Gastrocnemius medialis (tissue), 4 donors: ENCODE measurements at regions of chr3 and their contacts with region 1.

Region 1: GRCh38 chr3:134473868-134474546 is 11.8 kb downstream of the ANAPC13 start:
- DNase-seq: peak; percentile 40 to 41
- ATAC-seq: peak; percentile 63 to 75
- H3K4me3 ChIP-seq: no peak overlapping the region
- H3K27ac ChIP-seq: no peak overlapping the region
- H3K4me1 ChIP-seq: peaks cover 12 to 15% of the 10 kb centered on the region in 2 donors
- H3K27me3 ChIP-seq: no peaks in the 10 kb centered on the region
- CTCF ChIP-seq: peak; percentile 68 to 82 (median 79)
- POLR2A ChIP-seq: no peak

Region 2: GRCh38 chr3:133927540-133928066 is 546.4 kb before region 1 on chr3:
- in situ Hi-C with region 1: no loop called
- intact Hi-C with region 1: loop called (anchors 10 kb)
- DNase-seq: no peak
- ATAC-seq: peak; percentile 53 to 80
- H3K4me3 ChIP-seq: peak overlapping the region; percentile 28 to 80 (median 52)
- H3K27ac ChIP-seq: no peak overlapping the region
- H3K4me1 ChIP-seq: peaks cover 0 to 9% of the 10 kb centered on the region in 2 donors
- H3K27me3 ChIP-seq: peaks cover 0 to 2% (median 0%) of the 10 kb centered on the region in 3 donors
- CTCF ChIP-seq: peak; percentile 59 to 89 (median 85)
- POLR2A ChIP-seq: no peak

Region 3: DNA sequence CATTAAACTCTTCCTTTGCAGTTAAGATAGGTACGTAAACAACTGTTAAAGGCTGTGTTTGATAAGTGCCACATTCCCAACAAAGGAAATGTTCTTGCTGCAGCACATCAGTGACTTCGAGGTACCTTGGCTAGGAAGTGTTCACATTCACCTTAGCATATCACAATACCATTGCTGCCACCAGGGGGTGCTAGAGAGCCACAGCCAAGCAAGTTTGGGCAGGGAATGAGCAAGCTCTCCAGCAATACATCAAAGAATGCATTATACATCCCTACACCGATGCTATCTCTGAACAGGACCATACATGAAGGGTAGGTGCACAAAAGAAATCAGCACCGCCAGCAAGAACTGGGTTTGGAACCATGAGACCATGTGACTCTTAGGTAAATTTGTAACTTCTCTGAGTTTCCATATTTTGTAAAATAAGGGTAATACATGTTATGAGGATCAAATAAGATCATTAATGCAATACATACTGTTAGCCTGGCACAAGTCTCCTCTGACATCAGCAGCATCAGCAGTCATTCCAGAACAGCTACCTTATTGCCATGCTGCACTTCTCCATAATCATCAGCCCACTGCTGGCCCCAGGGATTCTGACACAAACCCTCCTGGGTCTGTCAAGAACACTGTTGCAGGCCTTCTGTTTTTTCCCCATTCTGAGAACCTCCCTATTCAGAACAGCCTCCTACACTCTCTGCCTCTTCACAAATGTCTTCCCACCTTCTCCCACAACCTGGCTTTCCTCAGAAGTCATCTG is 260.9 kb before region 1 on chr3:
- in situ Hi-C with region 1: loop called in 3 of 4 experiments (anchors 5 kb)
- intact Hi-C with region 1: loop called (anchors 5 kb)
- DNase-seq: peak; percentile 37 to 65
- ATAC-seq: peak; percentile 78 to 84
- H3K4me3 ChIP-seq: no peak overlapping the region
- H3K27ac ChIP-seq: no peak overlapping the region
- H3K4me1 ChIP-seq: peaks cover 4 to 18% of the 10 kb centered on the region in 2 donors
- H3K27me3 ChIP-seq: no peaks in the 10 kb centered on the region
- CTCF ChIP-seq: peak; percentile 77 to 98 (median 92)
- POLR2A ChIP-seq: no peak

Region 4: GRCh38 chr3:134308350-134308891 is 165.6 kb before region 1 on chr3:
- in situ Hi-C with region 1: loop called (anchors 5 kb)
- intact Hi-C with region 1: loop called (anchors 1 kb)
- DNase-seq: peak; percentile 62 to 82
- ATAC-seq: peak; percentile 74 to 79
- H3K4me3 ChIP-seq: no peak overlapping the region
- H3K27ac ChIP-seq: peak overlapping the region; percentile 3 to 82 (median 22)
- H3K4me1 ChIP-seq: peaks cover 6 to 15% of the 10 kb centered on the region in 2 donors
- H3K27me3 ChIP-seq: no peaks in the 10 kb centered on the region
- CTCF ChIP-seq: peak; percentile 99 to 100 (median 99)
- POLR2A ChIP-seq: no peak

Region 5: DNA sequence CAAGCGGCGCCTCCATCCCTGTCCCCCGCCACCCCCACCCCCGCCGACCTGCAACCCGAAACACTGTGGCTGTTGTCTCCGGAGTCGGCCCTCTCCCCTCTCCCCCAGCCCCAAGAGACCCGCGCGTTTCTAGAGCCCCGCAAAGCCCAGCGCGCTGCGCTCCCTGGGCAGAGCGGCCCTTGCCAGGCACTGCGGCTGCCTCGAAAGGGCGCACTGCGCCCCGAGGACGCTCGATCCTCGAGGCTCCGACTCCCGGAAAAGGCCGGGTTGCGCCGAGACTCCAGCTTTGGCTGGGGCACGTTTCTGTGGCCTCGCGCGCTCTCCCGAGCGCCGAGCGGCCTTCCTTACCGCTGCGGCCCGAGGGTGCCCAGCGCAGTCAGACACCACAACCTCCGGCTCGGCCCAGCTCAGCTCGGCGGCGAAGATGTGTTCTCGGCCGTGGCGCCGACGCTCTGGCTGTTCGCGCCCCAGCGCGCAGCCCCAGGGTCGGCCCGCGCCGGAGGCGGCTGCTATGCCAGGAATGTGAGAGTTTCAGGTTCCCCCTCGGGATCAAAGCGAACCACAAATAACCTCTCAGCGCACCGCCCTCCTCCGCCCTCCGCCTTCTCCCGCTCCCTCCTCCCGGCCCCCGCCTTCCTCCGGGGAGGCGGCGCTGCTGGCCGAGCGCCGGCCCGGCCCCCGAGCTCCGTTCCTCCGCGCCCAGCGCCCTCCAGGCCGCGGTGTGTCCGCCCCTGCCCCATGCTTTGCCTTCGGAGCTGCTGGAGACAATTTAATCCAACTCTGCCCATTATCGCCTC is 99.8 kb before region 1 on chr3 and contains the start of gene AMOTL2:
- in situ Hi-C with region 1: loop called in 2 of 4 experiments (anchors 5 to 10 kb)
- intact Hi-C with region 1: loop called (anchors 2 kb)
- DNase-seq: peak; percentile 88 to 92
- ATAC-seq: peak; percentile 83 to 85
- H3K4me3 ChIP-seq: peak within 1 kb of the TSS; percentile 70 to 88 (median 77)
- H3K27ac ChIP-seq: peak within 1 kb of the TSS; percentile 93 to 99 (median 97)
- H3K4me1 ChIP-seq: peaks cover 37 to 63% of the 10 kb centered on the region in 2 donors
- H3K27me3 ChIP-seq: no peaks in the 10 kb centered on the region
- CTCF ChIP-seq: peak in 1 of 5 experiments; percentile 10
- POLR2A ChIP-seq: peak; percentile 75 to 88
- total RNA-seq, gene AMOTL2: 17.9 to 29.9 (median 20.6) TPM

Region 6: DNA sequence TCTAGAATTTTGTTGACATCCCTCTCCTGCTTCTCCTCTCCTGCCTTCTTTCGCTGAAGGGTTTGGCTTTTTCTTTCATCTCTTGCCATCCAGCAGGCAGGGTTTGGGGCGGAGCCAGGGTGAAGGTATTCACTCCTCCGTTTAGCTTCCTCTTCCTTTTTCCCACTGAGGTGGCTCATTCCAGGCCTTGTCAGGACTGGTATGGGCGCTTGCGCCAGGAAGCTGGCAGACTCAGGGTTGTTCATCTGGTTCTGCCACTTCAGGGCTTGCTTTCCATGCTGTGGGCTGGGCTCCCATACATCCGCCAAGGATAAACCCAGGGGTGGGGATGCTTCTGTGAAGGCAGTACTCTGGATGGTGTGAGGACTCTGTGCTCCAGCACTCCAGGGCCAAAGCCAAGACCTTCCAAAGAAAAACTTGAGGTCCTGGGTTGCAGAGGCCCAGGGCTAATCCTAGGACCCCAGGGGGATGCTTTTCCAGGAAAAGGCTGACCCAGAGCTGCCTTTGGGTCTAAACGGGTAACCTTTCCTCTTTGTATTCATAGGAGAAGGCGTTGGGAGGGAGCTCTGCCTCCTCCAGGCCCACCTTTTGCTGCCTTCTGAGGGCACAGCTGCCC is 92.1 kb before region 1 on chr3:
- in situ Hi-C with region 1: loop called in 3 of 4 experiments (anchors 5 to 10 kb)
- intact Hi-C with region 1: no loop called
- DNase-seq: no peak
- ATAC-seq: no peak
- H3K4me3 ChIP-seq: no peak overlapping the region
- H3K27ac ChIP-seq: no peak overlapping the region
- H3K4me1 ChIP-seq: peaks cover 0 to 11% of the 10 kb centered on the region in 2 donors
- H3K27me3 ChIP-seq: no peaks in the 10 kb centered on the region
- CTCF ChIP-seq: no peak
- POLR2A ChIP-seq: no peak

Region 7: GRCh38 chr3:134496471-134497071 is 22.6 kb after region 1 on chr3:
- in situ Hi-C with region 1: no loop called
- intact Hi-C with region 1: no loop called
- DNase-seq: no peak
- ATAC-seq: no peak
- H3K4me3 ChIP-seq: no peak overlapping the region
- H3K27ac ChIP-seq: no peak overlapping the region
- H3K4me1 ChIP-seq: peaks cover 11 to 14% of the 10 kb centered on the region in 2 donors
- H3K27me3 ChIP-seq: no peaks in the 10 kb centered on the region
- CTCF ChIP-seq: no peak
- POLR2A ChIP-seq: no peak